Sciatic nerve (tissue), 2 donors: ENCODE measurements at regions of chr11 and their contacts with region 1.

Region 1: DNA sequence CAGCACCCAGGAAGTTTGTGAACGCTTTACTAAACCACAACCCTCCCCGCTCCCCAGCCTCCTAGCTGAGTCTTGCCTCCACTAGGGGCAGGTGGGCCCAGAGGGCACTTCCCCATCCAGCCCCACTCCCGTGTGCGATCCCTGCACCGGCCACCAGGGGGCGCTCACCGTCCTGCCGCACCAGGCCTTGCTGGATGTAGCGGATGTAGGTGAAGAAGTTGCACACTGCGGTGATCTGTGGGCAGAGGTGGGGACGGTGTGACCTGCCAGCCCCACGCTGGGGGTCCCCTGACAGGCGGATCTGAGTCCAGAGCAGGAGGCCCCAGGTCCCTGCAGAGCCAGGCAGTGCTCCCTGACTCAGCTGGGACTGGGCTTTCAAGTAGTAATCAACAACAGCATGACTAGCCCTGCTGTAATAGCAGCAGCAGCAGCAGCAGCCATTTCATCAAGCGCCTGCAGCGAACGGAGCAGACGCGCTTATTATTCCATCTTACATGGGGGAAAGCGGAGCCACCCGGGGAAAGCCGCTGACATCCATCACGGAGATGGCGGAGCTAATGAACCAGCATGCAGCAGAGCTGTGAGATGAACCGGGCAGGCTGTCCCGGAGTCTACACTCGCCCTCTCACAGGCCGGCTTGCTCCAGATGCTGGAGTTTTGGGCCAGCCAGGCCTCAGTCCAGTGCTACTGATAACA is 7.9 kb upstream of the FADS3 start:
- DNase-seq: peak; percentile 93
- ATAC-seq: peak; percentile 86

Region 2: DNA sequence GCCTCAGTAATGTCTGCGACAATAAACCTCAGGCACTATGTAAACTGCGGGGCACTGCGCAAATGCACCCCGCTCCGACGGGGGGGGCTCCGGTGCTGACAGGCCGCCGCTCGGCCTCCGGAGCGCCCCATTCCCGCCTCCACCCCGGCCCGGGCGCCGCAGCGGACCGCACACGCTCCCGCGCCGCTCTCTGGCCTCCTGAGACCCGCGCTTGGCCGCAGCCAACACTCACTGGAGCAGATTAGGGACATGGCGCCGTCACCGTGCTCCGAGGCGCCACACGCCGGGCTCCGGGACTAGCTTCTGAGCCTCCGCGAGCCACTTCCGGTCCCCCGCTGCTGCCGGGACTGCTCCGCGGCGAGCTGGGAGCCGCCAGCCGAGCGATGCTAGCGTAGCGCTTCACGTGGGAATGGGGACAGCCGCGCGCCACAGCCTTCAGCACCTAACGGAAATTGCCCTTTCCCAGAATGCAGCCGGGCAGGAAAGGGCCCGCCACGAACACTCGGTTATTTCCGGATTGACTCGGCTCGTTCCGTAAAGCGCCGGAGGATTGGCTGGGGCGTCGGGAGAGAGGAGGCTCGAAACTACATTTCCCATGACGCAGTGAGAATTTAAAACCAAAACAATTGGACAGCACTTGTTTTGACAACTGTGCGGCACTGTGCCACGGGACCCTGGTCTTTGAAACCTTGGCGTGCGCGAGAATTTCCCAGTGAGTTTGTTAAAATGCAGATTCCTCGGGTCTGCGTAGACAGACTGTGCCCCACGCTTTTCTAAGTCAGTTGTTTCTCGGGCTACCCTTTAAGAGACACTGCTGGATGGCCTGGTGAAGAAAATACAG is 992.9 kb before region 1 on chr11 and contains the start of gene PRPF19:
- intact Hi-C with region 1: no loop called
- DNase-seq: peak; percentile 99
- ATAC-seq: peak; percentile 99
- total RNA-seq, gene PRPF19: 50.7 TPM

Region 3: GRCh38 chr11:61834278-61835048 is 64.8 kb before region 1 on chr11:
- intact Hi-C with region 1: no loop called
- DNase-seq: no peak
- ATAC-seq: peak; percentile 74

Region 4: GRCh38 chr11:61917341-61918109 is 18.2 kb after region 1 on chr11 and contains the start of gene RAB3IL1:
- intact Hi-C with region 1: no loop called
- DNase-seq: peak; percentile 84
- ATAC-seq: peak; percentile 73
- total RNA-seq, gene RAB3IL1: 70.5 TPM

Region 5: DNA sequence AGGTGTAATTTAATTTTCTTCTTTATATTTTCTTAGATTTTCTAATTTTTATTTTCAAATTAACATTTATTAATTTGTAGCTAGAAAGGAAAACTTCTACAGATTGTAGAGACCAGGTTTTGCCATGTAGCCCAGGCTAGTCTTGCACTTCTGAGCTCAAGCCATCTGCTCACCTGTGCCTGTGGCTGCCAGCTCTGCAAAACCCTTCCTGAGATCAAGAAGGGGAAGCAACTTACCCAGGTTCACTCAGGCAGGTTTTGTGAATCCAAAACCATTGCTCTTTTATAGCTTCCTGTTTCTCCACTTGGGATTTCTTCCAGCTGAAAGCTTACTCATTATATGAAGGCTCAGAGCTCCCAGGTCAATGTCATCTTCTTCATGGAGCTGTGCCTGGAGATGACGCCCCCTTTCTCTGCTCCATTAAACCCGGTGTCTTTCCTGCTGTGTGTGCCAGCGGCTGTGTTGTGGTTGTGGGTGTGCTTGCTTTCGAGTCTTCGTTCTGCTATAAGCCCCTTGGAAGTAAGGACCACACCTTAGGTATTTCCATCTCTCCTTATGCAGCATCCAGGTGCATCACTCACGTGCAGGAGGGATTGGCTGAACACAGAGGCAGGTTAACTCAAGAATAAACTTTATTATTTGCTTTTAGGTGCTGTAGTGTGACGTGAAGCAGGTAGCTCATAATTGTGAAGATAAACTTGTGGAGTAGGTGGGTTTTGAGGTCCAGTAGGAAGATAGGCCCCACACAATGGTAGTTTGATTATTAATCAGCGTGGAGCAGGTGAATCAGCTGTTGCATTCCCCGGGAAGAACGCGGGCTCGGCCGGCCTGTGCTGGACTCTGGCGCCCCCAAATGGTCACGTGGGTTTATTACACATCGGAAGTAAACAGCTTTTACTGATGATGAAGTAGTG is 182.3 kb after region 1 on chr11:
- intact Hi-C with region 1: loop called (anchors 2 kb)
- DNase-seq: peak; percentile 93
- ATAC-seq: peak; percentile 87